Activated naive CD4-positive, alpha-beta T cell treated with anti-CD3 and anti-CD28 coated beads for 36 hours (primary cell): ENCODE measurements at regions of chr15 and their contacts with region 1.

Region 1: DNA sequence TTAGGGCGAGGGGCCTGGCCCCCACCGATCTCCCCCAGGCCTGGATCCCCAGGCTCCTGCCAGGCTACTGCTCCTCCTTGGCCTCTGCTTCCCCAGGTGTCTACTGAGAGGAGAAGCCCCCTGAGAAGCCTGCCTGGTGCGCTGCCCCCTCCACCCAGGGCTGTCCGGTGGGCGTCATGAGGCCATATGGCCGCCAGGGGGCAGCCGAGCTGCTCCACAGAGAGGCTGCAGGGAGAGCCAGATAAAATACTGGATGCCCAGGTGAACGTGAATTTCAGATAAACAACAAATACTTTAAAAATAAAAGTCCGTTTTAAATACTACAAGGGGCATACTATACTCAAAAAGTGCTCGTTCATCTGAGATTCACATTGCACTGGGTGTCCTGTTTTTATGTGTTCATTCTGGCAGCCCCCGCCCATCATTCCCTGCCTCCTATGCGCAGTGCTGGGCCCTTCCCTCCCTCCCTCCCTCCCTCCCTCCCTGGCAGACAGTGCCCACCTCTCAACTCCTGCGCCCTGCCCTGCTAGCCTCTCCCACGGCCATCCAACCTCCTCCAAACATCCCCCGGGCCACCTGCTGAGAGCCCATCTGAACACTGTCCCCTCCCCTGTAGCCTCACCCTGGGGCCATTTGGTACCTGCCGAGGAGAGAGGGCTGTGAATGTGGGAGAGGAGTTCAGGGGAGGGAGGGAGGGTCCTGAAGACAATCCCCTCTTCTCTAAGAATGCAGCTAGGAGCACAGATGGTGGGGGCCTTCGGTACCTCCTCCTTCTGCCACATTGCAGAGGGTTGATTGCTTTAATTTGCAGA is 29.6 kb downstream of the PSTPIP1 start:
- DNase-seq: peak; percentile 74
- H3K4me3 Mint-ChIP-seq: no peak overlapping the region
- H3K27ac Mint-ChIP-seq: peak overlapping the region; percentile 100
- H3K4me1 Mint-ChIP-seq: peaks cover 47% of the 10 kb centered on the region
- H3K27me3 Mint-ChIP-seq: no peaks in the 10 kb centered on the region

Region 2: GRCh38 chr15:76931397-76932007 is 93.0 kb before region 1 on chr15 and contains the start of gene RCN2:
- CTCF ChIA-PET with region 1: interaction called, 3 read pairs
- intact Hi-C with region 1: loop called (anchors 2 kb)
- DNase-seq: peak; percentile 95
- H3K4me3 Mint-ChIP-seq: peak within 1 kb of the TSS; percentile 90
- H3K27ac Mint-ChIP-seq: peak within 1 kb of the TSS; percentile 78
- H3K4me1 Mint-ChIP-seq: peaks cover 26% of the 10 kb centered on the region
- H3K27me3 Mint-ChIP-seq: no peaks in the 10 kb centered on the region
- total RNA-seq, gene RCN2: 23.7 to 25.2 TPM

Region 3: DNA sequence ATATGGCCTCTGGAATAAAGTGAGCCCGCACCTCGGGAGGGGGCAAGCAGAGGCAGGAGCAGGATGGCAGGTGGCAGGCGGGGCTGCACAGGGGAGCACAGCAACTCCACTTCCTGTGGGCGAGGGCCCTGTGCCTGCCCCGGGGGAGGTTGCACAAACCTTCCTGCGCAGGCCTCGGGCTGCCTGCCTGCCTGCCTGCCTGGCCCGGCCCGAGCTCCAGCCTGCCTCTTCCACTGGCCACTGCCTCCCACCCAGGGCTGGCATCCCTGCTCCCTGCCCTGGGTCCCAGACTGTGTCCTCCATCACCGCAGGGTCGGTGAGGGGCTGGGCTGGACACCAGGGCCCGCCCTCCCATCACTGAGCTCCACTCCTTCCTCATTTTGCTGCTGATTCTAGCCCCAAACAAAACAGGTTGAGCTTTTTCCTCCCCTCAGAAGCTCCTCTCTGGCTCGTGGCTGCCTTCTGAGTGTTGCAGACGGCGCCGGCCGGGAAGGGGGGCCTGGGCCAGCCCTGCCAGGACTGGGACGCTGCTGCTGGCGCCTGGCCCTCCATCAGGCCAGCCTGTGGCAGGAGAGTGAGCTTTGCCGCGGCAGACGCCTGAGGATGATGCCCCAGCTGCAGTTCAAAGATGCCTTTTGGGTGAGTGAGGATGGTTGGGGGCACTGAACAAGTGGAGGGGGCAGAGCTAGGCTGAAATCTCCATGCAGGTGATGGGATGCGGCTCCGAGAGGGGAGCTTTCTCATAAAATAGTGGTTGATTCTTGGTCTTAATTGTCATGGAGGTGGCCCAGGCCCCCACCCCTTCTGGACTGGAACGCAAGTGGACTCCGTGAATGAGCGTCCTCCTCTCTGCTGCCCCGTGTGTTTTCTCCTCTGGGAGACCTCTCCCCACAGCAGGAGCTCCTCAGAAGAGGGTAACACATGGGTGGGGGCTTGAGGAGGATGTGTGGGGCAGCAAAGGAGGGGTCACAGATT is 29.2 kb before region 1 on chr15 and contains the start of gene PSTPIP1:
- CTCF ChIA-PET with region 1: interaction called, 23 read pairs
- intact Hi-C with region 1: loop called (anchors 1 kb)
- DNase-seq: peak; percentile 86
- H3K4me3 Mint-ChIP-seq: peak within 1 kb of the TSS; percentile 84
- H3K27ac Mint-ChIP-seq: peak within 1 kb of the TSS; percentile 98
- H3K4me1 Mint-ChIP-seq: peaks cover 58% of the 10 kb centered on the region
- H3K27me3 Mint-ChIP-seq: no peaks in the 10 kb centered on the region
- total RNA-seq, gene PSTPIP1: 94.2 to 102 TPM

Region 4: GRCh38 chr15:77034695-77035489 is 10.4 kb after region 1 on chr15:
- CTCF ChIA-PET with region 1: interaction called, 34 read pairs
- intact Hi-C with region 1: no loop called
- DNase-seq: peak; percentile 65
- H3K4me3 Mint-ChIP-seq: no peak overlapping the region
- H3K27ac Mint-ChIP-seq: peak overlapping the region; percentile 65
- H3K4me1 Mint-ChIP-seq: no peaks in the 10 kb centered on the region
- H3K27me3 Mint-ChIP-seq: no peaks in the 10 kb centered on the region

Region 5: GRCh38 chr15:77543159-77543882 is 518.8 kb after region 1 on chr15:
- CTCF ChIA-PET with region 1: interaction called, 4 read pairs
- intact Hi-C with region 1: loop called (anchors 5 kb)
- DNase-seq: peak; percentile 84
- H3K4me3 Mint-ChIP-seq: peak overlapping the region; percentile 67
- H3K27ac Mint-ChIP-seq: no peak overlapping the region
- H3K4me1 Mint-ChIP-seq: peaks cover 10% of the 10 kb centered on the region
- H3K27me3 Mint-ChIP-seq: no peaks in the 10 kb centered on the region